Transverse colon (tissue), 4 donors: ENCODE measurements at regions of chr12 and their contacts with region 1.

Region 1: DNA sequence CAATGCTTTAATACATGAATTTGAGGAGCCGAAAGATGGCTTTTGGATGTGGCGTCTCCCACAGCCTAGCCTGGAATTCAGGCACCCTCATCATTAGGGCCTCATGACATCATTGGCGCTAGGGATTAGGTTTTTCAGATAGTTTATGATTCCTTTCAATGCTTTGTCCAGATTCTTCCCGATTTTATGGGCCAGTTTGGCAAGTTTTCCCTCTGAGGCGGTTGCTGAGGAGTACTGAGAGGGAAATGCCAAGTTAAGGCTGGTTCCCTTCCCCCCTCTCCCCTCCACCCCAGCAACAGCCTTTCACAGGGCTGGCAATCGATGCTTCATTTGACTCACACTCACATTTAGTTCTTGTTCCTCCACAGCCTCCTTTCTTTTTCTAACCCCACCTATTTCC is 19.7 kb upstream of the PPP1R1A start:
- DNase-seq: no peak
- H3K4me3 ChIP-seq: no peak overlapping the region
- H3K27ac ChIP-seq: no peak overlapping the region
- H3K4me1 ChIP-seq: no peaks in the 10 kb centered on the region
- H3K27me3 ChIP-seq: no peaks in the 10 kb centered on the region
- CTCF ChIP-seq: no peak
- EP300 ChIP-seq: no peak
- POLR2A ChIP-seq: no peak

Region 2: GRCh38 chr12:54650409-54650808 is 42.2 kb after region 1 on chr12:
- in situ Hi-C with region 1: no loop called
- intact Hi-C with region 1: loop called (anchors 1 kb)
- DNase-seq: no peak
- H3K4me3 ChIP-seq: no peak overlapping the region
- H3K27ac ChIP-seq: no peak overlapping the region
- H3K4me1 ChIP-seq: no peaks in the 10 kb centered on the region
- H3K27me3 ChIP-seq: peaks cover 4% of the 10 kb centered on the region
- CTCF ChIP-seq: no peak
- EP300 ChIP-seq: no peak
- POLR2A ChIP-seq: no peak